T-cell (primary cell): ENCODE measurements at regions of chr5 and their contacts with region 1.

Region 1: GRCh38 chr5:130222573-130222972 is 318.3 kb downstream of the CHSY3 start:
- DNase-seq: no peak
- ATAC-seq: no peak
- H3K4me3 ChIP-seq: no peak overlapping the region
- H3K4me3 Mint-ChIP-seq: no peak overlapping the region
- H3K27ac ChIP-seq: no peak overlapping the region
- H3K27ac Mint-ChIP-seq: no peak overlapping the region
- H3K4me1 ChIP-seq: no peaks in the 10 kb centered on the region
- H3K4me1 Mint-ChIP-seq: no peaks in the 10 kb centered on the region
- H3K27me3 ChIP-seq: no peaks in the 10 kb centered on the region
- H3K27me3 Mint-ChIP-seq: peaks cover 0 to 3% of the 10 kb centered on the region in 2 donors

Region 2: GRCh38 chr5:129400322-129400983 is 822.1 kb before region 1 on chr5:
- CTCF ChIA-PET with region 1: interaction called in 1 of 2 experiments, 12 read pairs
- POLR2A ChIA-PET with region 1: no interaction called
- DNase-seq: no peak
- ATAC-seq: no peak
- H3K4me3 ChIP-seq: no peak overlapping the region
- H3K4me3 Mint-ChIP-seq: no peak overlapping the region
- H3K27ac ChIP-seq: no peak overlapping the region
- H3K27ac Mint-ChIP-seq: no peak overlapping the region
- H3K4me1 ChIP-seq: no peaks in the 10 kb centered on the region
- H3K4me1 Mint-ChIP-seq: no peaks in the 10 kb centered on the region
- H3K27me3 ChIP-seq: no peaks in the 10 kb centered on the region
- H3K27me3 Mint-ChIP-seq: no peaks in the 10 kb centered on the region

Region 3: GRCh38 chr5:129945028-129945427 is 277.5 kb before region 1 on chr5:
- CTCF ChIA-PET with region 1: no interaction called
- POLR2A ChIA-PET with region 1: no interaction called
- DNase-seq: no peak
- ATAC-seq: no peak
- H3K4me3 ChIP-seq: no peak overlapping the region
- H3K4me3 Mint-ChIP-seq: no peak overlapping the region
- H3K27ac ChIP-seq: no peak overlapping the region
- H3K27ac Mint-ChIP-seq: no peak overlapping the region
- H3K4me1 ChIP-seq: no peaks in the 10 kb centered on the region
- H3K4me1 Mint-ChIP-seq: no peaks in the 10 kb centered on the region
- H3K27me3 ChIP-seq: no peaks in the 10 kb centered on the region
- H3K27me3 Mint-ChIP-seq: peaks cover 0 to 13% of the 10 kb centered on the region in 2 donors

Region 4: DNA sequence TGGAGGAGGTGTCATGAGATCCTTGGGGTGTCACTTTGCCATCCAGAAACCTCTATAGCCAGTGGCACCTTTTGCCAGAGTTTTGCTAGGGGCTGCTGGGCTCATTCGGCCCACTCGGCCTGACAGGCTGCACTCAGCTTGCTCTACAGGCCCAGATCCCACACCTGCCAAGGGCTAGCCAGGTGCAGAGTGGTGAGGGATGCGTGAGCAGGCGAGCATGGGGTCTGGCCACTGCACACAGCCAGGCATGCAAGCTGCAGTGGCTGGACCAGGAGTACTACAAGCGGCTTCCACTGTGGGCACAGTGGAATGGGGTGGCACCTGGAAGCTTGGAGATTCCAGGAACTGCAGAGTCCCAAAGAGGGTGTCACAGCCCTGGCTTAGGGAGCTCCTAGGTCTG is 54.4 kb after region 1 on chr5:
- CTCF ChIA-PET with region 1: no interaction called
- POLR2A ChIA-PET with region 1: no interaction called
- DNase-seq: no peak
- ATAC-seq: no peak
- H3K4me3 ChIP-seq: no peak overlapping the region
- H3K4me3 Mint-ChIP-seq: no peak overlapping the region
- H3K27ac ChIP-seq: no peak overlapping the region
- H3K27ac Mint-ChIP-seq: no peak overlapping the region
- H3K4me1 ChIP-seq: no peaks in the 10 kb centered on the region
- H3K4me1 Mint-ChIP-seq: no peaks in the 10 kb centered on the region
- H3K27me3 ChIP-seq: peaks cover 0 to 6% of the 10 kb centered on the region in 2 experiments
- H3K27me3 Mint-ChIP-seq: peaks cover 0 to 3% of the 10 kb centered on the region in 2 donors